Naive thymus-derived CD4-positive, alpha-beta T cell (primary cell): ENCODE measurements at regions of chr14 and their contacts with region 1.

Region 1: DNA sequence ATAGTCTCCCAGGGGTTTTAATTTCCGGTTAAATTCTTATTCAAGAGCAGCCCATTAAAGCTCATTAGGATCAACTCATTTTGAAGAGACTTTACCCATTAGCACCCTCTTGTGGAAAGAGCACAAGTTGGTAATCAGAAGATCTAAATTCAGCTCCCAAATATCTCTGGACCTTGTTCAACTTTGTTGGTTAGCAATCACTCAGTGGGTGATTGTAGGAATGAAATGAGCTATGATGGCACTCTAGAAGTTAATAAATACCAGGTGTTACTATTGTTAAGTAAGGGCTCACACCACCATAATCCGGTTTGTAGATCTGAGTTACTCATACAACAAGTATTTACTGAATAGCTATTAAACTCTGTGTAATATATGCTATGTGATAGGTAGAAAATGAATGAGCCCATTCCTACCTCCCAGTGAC is 42.9 kb downstream of the TRIP11 start:
- DNase-seq: peak in 7 of 9 donors; percentile 12 to 58 (median 44)
- ATAC-seq: peak; percentile 66
- H3K4me3 ChIP-seq: no peak overlapping the region
- H3K4me3 Mint-ChIP-seq: peak overlapping the region in 3 of 10 donors; percentile 37 to 70 (median 48)
- H3K27ac ChIP-seq: no peak overlapping the region
- H3K27ac Mint-ChIP-seq: peak overlapping the region in 5 of 9 donors; percentile 15 to 70 (median 65)
- H3K4me1 ChIP-seq: peaks cover 10 to 27% of the 10 kb centered on the region in 2 donors
- H3K4me1 Mint-ChIP-seq: peaks cover 27 to 54% (median 41%) of the 10 kb centered on the region in 7 donors
- H3K27me3 ChIP-seq: no peaks in the 10 kb centered on the region
- H3K27me3 Mint-ChIP-seq: no peaks in the 10 kb centered on the region

Region 2: GRCh38 chr14:91649930-91650329 is 347.0 kb before region 1 on chr14:
- CTCF ChIA-PET with region 1: interaction called, 12 read pairs
- POLR2A ChIA-PET with region 1: no interaction called
- intact Hi-C with region 1: loop called in 1 of 2 experiments (anchors 1 kb)
- DNase-seq: peak in 7 of 9 donors; percentile 5 to 59 (median 24)
- ATAC-seq: no peak
- H3K4me3 ChIP-seq: no peak overlapping the region
- H3K4me3 Mint-ChIP-seq: no peak overlapping the region
- H3K27ac ChIP-seq: no peak overlapping the region
- H3K27ac Mint-ChIP-seq: no peak overlapping the region
- H3K4me1 ChIP-seq: no peaks in the 10 kb centered on the region
- H3K4me1 Mint-ChIP-seq: peaks cover 0 to 19% (median 5%) of the 10 kb centered on the region in 7 donors
- H3K27me3 ChIP-seq: no peaks in the 10 kb centered on the region
- H3K27me3 Mint-ChIP-seq: peaks cover 0 to 6% (median 4%) of the 10 kb centered on the region in 5 donors